Activated T-helper 1 cell treated with anti-CD3 and anti-CD28 coated beads, Interleukin-12 subunit alpha, Interleukin-12 subunit beta, Interleukin-2, Interleukin-4 antibody, amounts not matched to agents 30 ng/mL and 10 ng/mL and 1 ng/mL, durations not matched to agents 14 hours and 24 hours and 36 hours (primary cell): ENCODE measurements at regions of chr13 and their contacts with region 1.

Region 1: DNA sequence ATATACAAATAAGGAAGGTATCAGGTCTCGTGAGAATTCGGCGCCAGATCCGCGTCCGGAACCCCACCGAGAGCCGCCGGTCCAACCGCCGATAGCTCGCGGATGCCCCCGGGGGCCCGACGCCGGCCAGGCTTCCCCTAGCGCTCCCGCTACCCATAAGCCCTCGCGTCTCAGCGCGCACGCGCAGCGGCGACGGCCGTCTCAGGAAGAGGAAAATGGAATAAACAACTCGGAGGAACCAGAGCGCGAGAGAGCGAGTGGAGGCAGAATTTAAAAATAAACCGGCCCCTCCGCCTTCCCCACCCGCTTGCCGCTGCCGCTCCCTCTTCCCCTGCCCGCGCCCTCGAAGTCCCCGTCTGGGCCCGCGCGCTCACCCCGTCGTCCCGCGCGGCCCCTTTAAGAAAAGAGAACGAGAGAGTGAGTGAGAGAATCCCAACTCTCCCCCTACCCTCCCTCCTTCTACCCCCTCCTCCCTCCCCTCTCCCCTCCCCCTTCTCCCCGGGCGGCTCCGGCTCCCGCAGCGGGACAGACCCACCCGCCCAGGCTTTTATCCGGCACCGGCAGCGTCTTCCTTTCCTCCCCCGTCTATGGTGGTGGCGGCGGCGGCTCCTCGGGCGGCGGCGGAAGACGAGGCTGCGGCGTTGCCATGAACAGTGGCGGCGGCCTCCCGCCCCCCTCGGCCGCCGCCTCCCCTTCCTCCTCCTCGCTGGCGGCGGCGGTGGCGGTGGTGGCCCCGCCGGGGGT is at the start of gene PAN3:
- DNase-seq: peak; percentile 89
- H3K4me3 Mint-ChIP-seq: peak within 1 kb of the TSS; percentile 96
- H3K27ac Mint-ChIP-seq: peak within 1 kb of the TSS; percentile 97
- H3K4me1 Mint-ChIP-seq: peaks cover 50% of the 10 kb centered on the region
- H3K27me3 Mint-ChIP-seq: no peaks in the 10 kb centered on the region
- total RNA-seq, gene PAN3: 36.1 and 37.0 TPM in 2 replicates

Region 2: GRCh38 chr13:26221721-26222519 is 1916.3 kb before region 1 on chr13 and contains the start of gene RNF6:
- intact Hi-C with region 1: loop called (anchors 10 kb)
- DNase-seq: peak; percentile 83
- H3K4me3 Mint-ChIP-seq: peak within 1 kb of the TSS; percentile 99
- H3K27ac Mint-ChIP-seq: peak within 1 kb of the TSS; percentile 100
- H3K4me1 Mint-ChIP-seq: peaks cover 38% of the 10 kb centered on the region
- H3K27me3 Mint-ChIP-seq: no peaks in the 10 kb centered on the region
- total RNA-seq, gene RNF6: 53.2 and 54.9 TPM in 2 replicates

Region 3: DNA sequence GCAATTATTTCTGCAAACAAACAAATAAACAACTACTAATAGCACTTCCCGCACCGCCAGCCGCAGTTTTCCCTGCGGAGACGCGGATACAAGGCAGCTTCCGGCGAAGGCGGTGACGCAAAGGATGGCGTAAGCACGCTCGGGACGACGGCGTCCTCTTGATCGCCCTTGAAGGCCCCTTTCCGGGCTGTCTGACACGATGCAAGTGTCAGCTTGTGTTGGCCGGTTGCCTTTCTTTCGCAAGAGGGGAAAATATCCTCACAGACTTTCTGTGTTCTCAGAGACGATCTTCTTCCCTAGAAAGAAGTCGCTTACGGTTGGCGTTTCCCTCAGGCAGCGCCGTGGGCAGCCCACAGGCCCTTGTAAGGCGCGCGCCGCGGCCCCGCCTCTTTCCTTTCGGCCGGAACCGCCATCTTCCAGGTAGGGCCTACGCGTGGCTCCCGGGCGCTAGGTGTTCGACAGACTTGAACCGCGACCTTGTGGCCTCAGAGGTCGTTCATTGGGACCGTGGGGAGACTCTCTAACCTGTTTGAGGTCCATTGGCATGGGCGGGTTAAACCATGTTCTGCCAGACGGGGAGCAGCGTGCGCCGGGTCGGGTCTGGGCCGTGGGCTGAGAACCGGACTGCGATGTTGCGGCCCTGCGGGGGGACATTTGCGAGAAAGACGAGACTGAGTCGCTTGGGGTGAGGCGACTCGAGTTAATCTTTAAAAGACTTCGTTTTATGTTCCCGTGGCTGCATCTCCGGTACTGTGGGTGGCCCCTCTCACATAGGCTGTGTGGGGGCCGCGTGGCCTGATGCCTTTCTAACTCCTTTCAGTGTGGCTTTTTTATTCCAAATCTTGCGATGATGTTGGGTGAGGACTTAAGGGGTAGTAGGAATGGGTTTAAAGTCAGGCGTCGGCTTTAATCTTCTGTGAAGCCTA is 886.8 kb before region 1 on chr13 and contains the start of gene RPL21:
- intact Hi-C with region 1: loop called (anchors 2 kb)
- DNase-seq: peak; percentile 86
- H3K4me3 Mint-ChIP-seq: peak within 1 kb of the TSS; percentile 94
- H3K27ac Mint-ChIP-seq: peak within 1 kb of the TSS; percentile 91
- H3K4me1 Mint-ChIP-seq: peaks cover 40% of the 10 kb centered on the region
- H3K27me3 Mint-ChIP-seq: no peaks in the 10 kb centered on the region
- total RNA-seq, gene RPL21: 1,045 and 1,084 TPM in 2 replicates

Region 4: GRCh38 chr13:28058866-28059624 is 79.1 kb before region 1 on chr13:
- intact Hi-C with region 1: loop called (anchors 5 kb)
- DNase-seq: peak; percentile 8
- H3K4me3 Mint-ChIP-seq: no peak overlapping the region
- H3K27ac Mint-ChIP-seq: no peak overlapping the region
- H3K4me1 Mint-ChIP-seq: no peaks in the 10 kb centered on the region
- H3K27me3 Mint-ChIP-seq: peaks cover 21% of the 10 kb centered on the region

Region 5: DNA sequence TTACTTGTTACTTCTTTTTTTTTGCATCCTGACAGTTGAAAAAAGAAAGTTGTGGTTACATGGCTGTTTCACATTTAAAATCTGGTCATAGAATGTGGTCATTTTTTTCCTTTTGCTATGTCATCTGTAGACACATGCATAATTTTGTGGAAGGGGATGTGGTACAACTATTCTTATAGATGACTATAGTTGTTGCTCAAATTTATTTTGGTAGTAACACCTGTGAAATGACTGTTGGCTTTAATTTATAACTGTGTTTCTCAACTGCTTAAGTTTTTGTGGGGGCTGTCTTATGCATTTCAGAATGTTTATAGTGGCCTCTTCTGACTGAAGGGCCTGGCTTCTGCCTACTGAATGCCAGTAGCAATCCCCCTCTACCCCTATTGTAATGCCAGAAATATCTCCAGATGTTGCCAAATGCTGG is 130.6 kb after region 1 on chr13:
- intact Hi-C with region 1: loop called (anchors 1 kb)
- DNase-seq: no peak
- H3K4me3 Mint-ChIP-seq: peak overlapping the region; percentile 49
- H3K27ac Mint-ChIP-seq: peak overlapping the region; percentile 70
- H3K4me1 Mint-ChIP-seq: peaks cover 27% of the 10 kb centered on the region
- H3K27me3 Mint-ChIP-seq: no peaks in the 10 kb centered on the region

Region 6: GRCh38 chr13:28718543-28719226 is 580.5 kb after region 1 on chr13 and contains the start of gene SLC46A3:
- intact Hi-C with region 1: loop called (anchors 2 kb)
- DNase-seq: peak; percentile 95
- H3K4me3 Mint-ChIP-seq: peak within 1 kb of the TSS; percentile 85
- H3K27ac Mint-ChIP-seq: peak within 1 kb of the TSS; percentile 82
- H3K4me1 Mint-ChIP-seq: peaks cover 32% of the 10 kb centered on the region
- H3K27me3 Mint-ChIP-seq: peaks cover 4% of the 10 kb centered on the region
- total RNA-seq, gene SLC46A3: 2.7 and 3.8 TPM in 2 replicates